AG04449 (cell line): ENCODE measurements at regions of chr4 and their contacts with region 1.

Region 1: GRCh38 chr4:106369456-106370060 is 980 bp upstream of the GIMD1 start:
- DNase-seq: peak; percentile 53
- H3K4me3 ChIP-seq: no peak overlapping the region
- CTCF ChIP-seq: peak; percentile 52

Region 2: GRCh38 chr4:106384878-106385277 is 15.3 kb after region 1 on chr4:
- CTCF ChIA-PET with region 1: interaction called, 17 read pairs
- POLR2A ChIA-PET with region 1: no interaction called
- DNase-seq: no peak
- H3K4me3 ChIP-seq: no peak overlapping the region
- CTCF ChIP-seq: no peak

Region 3: DNA sequence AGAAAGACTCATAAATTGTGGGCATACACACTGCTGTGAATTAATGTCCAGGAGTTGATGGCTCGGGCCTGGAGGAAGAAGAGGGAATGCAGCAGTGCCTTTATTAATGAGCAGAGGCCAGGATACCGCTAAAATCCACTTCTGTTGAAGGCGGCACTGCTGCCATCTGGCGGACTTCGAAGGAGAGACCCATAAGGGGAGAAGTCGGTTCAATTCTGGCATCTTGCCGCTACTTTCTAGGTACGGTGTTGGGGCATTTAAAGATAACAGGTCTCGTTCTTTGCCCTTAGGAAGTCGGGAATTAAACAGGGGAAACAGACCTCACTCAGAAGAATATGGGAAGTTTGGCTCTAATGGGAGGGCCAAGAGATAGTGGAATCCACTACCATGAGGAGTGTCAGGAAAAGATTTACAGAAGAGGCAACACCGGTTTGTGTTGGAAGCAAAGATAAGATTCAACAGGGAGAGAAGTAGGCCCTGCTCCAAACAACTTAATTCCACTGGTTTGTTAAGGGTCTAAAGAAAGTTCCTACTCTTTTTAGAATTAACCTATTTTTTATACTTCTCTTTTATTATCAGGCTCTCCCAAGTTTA is 132.6 kb after region 1 on chr4:
- CTCF ChIA-PET with region 1: interaction called, 65 read pairs
- POLR2A ChIA-PET with region 1: no interaction called
- DNase-seq: no peak
- H3K4me3 ChIP-seq: no peak overlapping the region
- CTCF ChIP-seq: peak; percentile 78

Region 4: DNA sequence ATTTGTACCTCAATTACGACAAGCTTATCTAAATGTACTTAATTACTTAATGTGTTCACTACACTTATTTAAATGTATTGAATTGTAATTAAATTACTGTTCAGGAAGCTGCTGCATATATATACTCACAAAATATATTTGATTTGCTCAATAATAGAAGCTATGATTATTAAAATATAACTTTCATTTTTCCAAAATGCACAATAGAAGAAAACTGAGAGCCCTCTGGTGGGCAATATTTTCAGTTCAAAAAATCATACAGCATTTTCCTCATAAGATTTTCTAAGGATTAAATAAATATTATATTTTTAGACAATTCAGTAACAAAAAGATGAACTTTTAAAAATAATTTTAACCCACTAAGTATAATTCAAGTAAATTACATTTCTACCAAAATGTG is 449.2 kb after region 1 on chr4:
- CTCF ChIA-PET with region 1: interaction called, 38 read pairs
- POLR2A ChIA-PET with region 1: interaction called, 3 read pairs
- DNase-seq: no peak
- H3K4me3 ChIP-seq: no peak overlapping the region
- CTCF ChIP-seq: no peak